Mammary epithelial cell (primary cell): ENCODE measurements at regions of chr6 and their contacts with region 1.

Region 1: DNA sequence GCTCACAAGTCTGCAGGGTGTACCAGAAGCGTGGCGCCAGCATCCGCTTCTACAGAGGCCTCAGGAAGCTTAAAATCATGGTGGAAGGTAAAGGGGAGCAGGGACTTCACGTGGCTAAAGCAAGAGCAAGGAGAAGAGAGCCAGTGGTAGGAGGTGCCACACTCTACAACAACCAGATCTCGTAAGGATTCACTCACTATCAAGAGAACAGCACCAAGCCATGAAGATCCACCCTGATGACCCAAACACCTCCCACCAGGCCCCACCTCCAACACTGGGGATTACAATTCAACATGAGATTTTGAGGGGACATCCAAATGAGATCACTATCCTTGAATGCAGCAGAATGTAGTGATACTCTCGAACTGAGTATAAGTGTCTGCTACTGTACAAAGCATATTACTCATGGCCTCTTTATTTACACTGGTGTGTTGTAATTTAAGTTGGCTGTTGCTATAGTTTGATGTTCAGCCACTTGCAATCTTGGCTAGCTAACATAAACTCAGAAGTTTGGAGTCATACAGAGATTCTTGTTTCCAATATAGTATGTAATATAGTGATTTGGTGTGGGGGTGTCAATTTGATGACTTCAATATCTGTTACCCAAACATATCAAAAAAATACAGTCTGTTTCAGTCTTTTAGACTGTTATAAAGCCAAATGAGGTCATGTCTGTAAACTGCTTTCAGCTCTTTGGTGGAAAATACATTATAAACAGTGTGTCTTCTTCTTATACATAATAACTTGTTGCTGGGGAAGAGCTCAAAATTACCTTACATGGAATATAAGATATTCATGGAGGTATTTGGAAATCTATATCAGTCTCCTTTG is 39.4 kb upstream of the MYLIP start:
- DNase-seq: peak; percentile 17
- H3K4me3 ChIP-seq: no peak overlapping the region
- H3K27ac ChIP-seq: no peak overlapping the region
- H3K4me1 ChIP-seq: no peaks in the 10 kb centered on the region
- H3K27me3 ChIP-seq: peaks cover 2% of the 10 kb centered on the region
- CTCF ChIP-seq: no peak

Region 2: GRCh38 chr6:16168858-16169257 is 79.4 kb after region 1 on chr6:
- CTCF ChIA-PET with region 1: no interaction called
- dilution Hi-C with region 1: loop called (anchors 5 kb)
- in situ Hi-C with region 1: no loop called
- intact Hi-C with region 1: no loop called
- DNase-seq: no peak
- H3K4me3 ChIP-seq: no peak overlapping the region
- H3K27ac ChIP-seq: no peak overlapping the region
- H3K4me1 ChIP-seq: no peaks in the 10 kb centered on the region
- H3K27me3 ChIP-seq: peaks cover 10% of the 10 kb centered on the region
- CTCF ChIP-seq: peak; percentile 19 to 48

Region 3: DNA sequence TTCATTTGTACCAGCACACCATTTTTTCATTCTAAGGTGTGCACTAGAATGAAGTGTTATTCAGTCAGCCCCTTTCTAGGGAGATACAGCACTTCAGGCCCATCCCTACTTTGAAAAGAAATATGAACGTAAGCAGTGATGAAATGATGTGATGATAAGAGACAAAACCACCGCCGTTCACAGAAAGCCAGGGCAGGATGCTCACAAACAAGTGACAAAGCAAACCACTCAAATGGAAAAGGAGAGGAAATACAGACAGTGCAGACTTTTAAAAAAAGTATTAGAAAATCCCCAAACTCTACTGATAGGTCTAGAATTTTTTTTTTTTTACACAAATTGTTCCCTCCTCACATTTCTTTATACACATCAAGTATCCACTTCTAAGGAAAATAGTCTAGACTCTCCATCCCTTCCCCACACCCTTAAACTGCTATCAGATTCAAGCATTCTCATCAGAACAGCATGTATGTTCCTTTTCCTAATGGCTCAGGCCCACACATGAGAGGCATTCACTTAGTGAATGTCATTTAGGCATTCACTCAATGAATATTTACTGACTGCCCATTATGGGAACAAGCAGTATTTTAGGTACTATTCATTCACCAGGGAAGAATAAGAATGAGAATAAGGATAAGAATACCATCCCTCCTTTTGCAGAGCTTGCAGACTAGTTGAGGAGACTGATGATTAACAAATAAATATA is 392.4 kb after region 1 on chr6:
- CTCF ChIA-PET with region 1: no interaction called
- dilution Hi-C with region 1: no loop called
- in situ Hi-C with region 1: no loop called
- intact Hi-C with region 1: no loop called
- DNase-seq: no peak
- H3K4me3 ChIP-seq: no peak overlapping the region
- H3K27ac ChIP-seq: no peak overlapping the region
- H3K4me1 ChIP-seq: peaks cover 7% of the 10 kb centered on the region
- H3K27me3 ChIP-seq: no peaks in the 10 kb centered on the region
- CTCF ChIP-seq: no peak